Activated naive CD4-positive, alpha-beta T cell treated with anti-CD3 and anti-CD28 coated beads for 36 hours (primary cell): ENCODE measurements at regions of chr15 and their contacts with region 1.

Region 1: DNA sequence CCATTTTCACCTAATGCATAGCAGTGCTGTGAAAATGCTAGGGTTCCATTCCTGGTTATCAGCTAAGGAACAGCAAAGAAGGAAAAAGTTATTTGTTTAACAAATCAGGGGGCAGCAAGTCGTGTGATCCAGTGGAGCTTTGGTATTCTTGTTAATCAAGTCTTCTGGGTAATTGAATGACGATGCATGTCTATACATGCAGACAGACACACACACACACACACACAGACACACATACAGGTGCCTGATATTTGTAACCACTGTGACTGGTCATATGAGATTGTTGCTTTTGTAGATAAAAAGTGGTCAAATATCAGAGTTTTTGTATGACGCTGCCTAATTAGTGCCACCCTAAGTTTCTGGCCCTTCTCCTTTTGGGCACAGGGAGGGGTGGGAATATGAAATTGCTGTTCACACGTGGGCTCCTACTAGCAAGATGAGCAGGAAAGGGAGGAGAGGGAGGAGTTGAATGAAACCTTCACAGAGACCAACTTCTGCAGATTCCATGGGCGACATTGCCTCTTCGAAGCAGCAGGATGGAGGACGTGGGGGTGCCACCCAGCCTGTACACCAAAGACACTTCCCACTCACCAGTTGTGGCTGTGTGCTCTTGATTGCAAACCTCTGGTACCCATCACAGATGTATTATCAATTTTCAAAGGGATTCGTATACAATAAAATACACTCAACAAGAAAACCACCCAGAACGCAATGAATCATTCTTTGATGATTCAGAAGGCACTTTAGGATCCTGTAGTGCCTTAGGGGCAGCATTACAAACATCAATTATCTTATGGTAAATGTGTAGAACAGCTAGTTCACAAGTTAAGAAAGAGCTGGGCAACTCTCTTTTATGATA is 281.9 kb upstream of the ICE2 start:
- DNase-seq: peak; percentile 46
- H3K4me3 Mint-ChIP-seq: no peak overlapping the region
- H3K27ac Mint-ChIP-seq: peak overlapping the region; percentile 25
- H3K4me1 Mint-ChIP-seq: peaks cover 33% of the 10 kb centered on the region
- H3K27me3 Mint-ChIP-seq: no peaks in the 10 kb centered on the region

Region 2: GRCh38 chr15:60729850-60730458 is 30.9 kb before region 1 on chr15:
- CTCF ChIA-PET with region 1: no interaction called
- intact Hi-C with region 1: loop called (anchors 2 kb)
- DNase-seq: peak; percentile 76
- H3K4me3 Mint-ChIP-seq: peak overlapping the region; percentile 65
- H3K27ac Mint-ChIP-seq: peak overlapping the region; percentile 82
- H3K4me1 Mint-ChIP-seq: peaks cover 42% of the 10 kb centered on the region
- H3K27me3 Mint-ChIP-seq: no peaks in the 10 kb centered on the region